Right ventricle myocardium inferior (tissue), 1 donor: ENCODE measurements at regions of chr1 and their contacts with region 1.

Region 1: DNA sequence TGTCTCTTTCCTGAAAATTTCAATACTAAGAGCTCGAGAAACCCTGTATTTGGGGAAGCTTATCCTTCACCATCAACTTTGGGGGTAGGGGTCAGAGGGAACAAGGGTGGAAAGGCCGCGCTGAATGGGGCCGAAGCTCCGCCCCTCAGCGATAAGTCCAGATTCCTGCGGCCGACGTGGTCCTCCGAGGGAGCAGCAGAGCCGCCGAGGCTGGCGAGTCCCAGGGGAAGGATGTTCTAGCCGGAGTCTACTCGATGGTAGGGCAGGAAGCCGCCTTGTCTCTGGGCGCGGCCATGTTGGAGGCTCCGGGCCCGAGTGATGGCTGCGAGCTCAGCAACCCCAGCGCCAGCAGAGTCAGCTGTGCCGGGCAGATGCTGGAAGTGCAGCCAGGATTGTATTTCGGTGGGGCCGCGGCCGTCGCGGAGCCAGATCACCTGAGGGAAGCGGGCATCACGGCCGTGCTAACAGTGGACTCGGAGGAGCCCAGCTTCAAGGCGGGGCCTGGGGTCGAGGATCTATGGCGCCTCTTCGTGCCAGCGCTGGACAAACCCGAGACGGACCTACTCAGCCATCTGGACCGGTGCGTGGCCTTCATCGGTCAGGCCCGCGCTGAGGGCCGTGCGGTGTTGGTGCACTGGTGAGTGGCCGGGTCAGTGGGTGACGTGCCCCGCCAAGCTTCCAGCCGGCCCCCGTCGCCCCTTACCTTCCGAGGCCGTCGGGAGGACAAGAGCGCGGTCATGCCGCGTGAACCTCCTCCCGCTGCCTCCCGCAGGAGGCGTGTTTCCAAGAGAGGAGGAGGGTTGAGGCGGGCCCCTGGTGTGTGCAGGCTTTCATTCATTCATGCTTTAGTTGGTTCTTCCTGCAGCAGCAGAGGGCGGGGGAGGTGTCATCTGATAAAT is at the start of gene DUSP12:
- DNase-seq: peak; percentile 97
- ATAC-seq: peak; percentile 100
- total RNA-seq, gene DUSP12: 7.0 TPM

Region 2: GRCh38 chr1:161486806-161487741 is 262.7 kb before region 1 on chr1:
- intact Hi-C with region 1: loop called (anchors 10 kb)
- DNase-seq: no peak
- ATAC-seq: peak; percentile 56

Region 3: GRCh38 chr1:161766102-161766981 is 16.6 kb after region 1 on chr1 and contains the start of gene ATF6:
- intact Hi-C with region 1: loop called (anchors 1 kb)
- DNase-seq: peak; percentile 89
- ATAC-seq: peak; percentile 89
- total RNA-seq, gene ATF6: 12.6 TPM